Mammary epithelial cell (primary cell): ENCODE measurements at regions of chr17 and their contacts with region 1.

Region 1: DNA sequence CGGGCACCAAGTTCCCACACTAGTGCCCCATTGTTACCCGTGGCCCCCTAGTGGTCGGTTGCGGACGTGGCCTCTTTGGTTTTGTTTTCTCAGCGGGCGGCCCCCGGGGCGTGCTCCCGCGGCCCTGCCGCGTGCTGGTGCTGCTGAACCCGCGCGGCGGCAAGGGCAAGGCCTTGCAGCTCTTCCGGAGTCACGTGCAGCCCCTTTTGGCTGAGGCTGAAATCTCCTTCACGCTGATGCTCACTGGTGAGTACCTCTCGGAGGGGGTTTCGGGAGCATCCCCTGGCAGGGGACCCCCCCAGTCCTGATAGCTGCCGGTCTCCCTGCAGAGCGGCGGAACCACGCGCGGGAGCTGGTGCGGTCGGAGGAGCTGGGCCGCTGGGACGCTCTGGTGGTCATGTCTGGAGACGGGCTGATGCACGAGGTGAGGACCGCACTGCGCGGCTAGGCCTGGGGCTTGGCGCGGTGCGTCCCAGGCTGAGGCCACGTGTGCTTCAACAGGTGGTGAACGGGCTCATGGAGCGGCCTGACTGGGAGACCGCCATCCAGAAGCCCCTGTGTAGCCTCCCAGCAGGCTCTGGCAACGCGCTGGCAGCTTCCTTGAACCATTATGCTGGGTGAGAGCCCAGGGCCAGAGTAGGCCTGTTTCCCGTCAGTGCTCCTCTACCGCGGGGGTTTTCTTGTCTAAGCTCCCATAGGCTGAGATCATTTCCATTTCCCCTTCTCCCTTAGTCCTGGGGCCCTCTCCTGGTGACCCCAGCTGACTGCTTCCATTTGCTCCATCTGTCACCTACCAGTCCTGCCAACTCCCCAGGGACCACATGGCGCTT is 1.7 kb downstream of the SPHK1 start:
- DNase-seq: peak; percentile 74
- H3K4me3 ChIP-seq: peak overlapping the region; percentile 63 to 69 (median 68)
- H3K27ac ChIP-seq: peak overlapping the region; percentile 86
- H3K4me1 ChIP-seq: peaks cover 38% of the 10 kb centered on the region
- H3K27me3 ChIP-seq: no peaks in the 10 kb centered on the region
- CTCF ChIP-seq: peak; percentile 76 to 81

Region 2: GRCh38 chr17:76204277-76204676 is 181.8 kb before region 1 on chr17:
- CTCF ChIA-PET with region 1: interaction called, 10 read pairs
- dilution Hi-C with region 1: no loop called
- in situ Hi-C with region 1: no loop called
- intact Hi-C with region 1: no loop called
- DNase-seq: peak; percentile 47
- H3K4me3 ChIP-seq: no peak overlapping the region
- H3K27ac ChIP-seq: no peak overlapping the region
- H3K4me1 ChIP-seq: peaks cover 9% of the 10 kb centered on the region
- H3K27me3 ChIP-seq: no peaks in the 10 kb centered on the region
- CTCF ChIP-seq: no peak

Region 3: DNA sequence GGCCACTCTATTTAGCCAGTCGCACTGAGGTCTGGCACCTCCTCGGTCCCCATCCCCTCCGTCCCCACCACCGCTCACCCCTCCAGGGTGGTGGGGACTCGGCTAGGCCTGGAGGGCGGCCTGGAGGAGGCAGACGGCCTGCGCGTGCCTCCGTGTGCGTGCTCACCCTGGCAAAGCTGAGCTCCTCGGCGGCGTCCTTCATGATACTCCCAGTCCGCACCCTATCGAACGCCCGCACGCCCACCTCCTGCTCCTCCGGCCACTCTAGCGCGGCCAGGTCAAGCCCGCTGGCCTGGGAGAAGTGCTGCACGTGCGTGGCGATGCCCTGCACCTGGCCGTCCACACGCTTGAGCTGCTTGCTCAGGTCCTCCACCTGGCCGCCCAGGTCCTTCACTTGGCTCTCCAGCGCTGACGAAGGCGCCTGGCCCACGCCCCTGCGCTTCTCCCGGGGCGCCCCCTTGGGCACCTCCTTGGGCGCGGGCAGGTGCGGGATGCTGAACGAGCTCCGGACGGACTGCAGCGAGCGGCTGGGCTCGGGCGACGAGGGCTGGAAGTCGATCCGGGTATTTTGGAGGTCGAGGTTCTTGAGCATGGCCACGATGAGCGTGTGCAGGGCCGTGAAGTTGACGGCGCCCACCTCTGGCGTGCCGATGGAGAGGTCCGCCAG is 78.7 kb before region 1 on chr17:
- CTCF ChIA-PET with region 1: no interaction called
- dilution Hi-C with region 1: no loop called
- in situ Hi-C with region 1: no loop called
- intact Hi-C with region 1: loop called (anchors 1 kb)
- DNase-seq: no peak
- H3K4me3 ChIP-seq: no peak overlapping the region
- H3K27ac ChIP-seq: no peak overlapping the region
- H3K4me1 ChIP-seq: no peaks in the 10 kb centered on the region
- H3K27me3 ChIP-seq: no peaks in the 10 kb centered on the region
- CTCF ChIP-seq: no peak

Region 4: DNA sequence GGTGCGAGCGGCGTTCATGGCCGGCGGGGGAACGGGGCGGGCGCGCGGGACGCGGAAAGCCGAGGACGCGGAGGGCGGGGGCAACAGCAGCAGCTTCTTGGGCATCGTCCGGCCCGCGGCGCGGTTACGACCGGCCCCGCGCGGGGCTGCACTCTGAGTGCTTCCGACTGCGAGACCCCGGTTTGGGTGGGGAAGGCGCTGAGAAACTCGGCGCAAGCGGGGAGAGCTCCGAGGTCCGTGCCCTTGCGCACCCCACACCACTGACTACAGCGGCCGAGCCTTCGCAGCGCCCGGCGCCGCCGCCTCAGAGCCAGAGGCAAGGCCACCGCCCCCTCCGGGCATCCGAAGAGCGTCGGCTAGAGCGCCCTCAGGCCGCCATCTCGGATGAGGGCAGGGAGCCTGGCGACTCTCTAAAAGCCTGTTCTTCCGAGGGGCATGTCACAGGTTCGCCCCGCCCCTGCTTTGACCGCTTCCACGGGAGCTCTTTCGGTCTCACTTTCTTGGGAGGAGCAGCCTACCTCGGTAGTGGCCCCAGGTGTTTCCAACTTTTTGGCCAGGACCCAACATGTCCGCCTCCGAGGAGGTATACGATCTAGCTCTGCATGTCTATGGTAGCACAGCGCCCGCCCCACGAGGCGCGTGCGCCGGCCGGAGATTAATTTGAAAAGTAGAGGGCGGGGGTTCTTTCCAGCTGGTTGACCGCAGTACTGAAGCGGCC is 32.3 kb before region 1 on chr17 and contains the start of gene PRPSAP1:
- CTCF ChIA-PET with region 1: interaction called, 5 read pairs
- dilution Hi-C with region 1: no loop called
- in situ Hi-C with region 1: no loop called
- intact Hi-C with region 1: loop called (anchors 1 kb)
- DNase-seq: peak; percentile 98
- H3K4me3 ChIP-seq: peak within 1 kb of the TSS; percentile 68 to 90 (median 72)
- H3K27ac ChIP-seq: peak within 1 kb of the TSS; percentile 81
- H3K4me1 ChIP-seq: peaks cover 8% of the 10 kb centered on the region
- H3K27me3 ChIP-seq: no peaks in the 10 kb centered on the region
- CTCF ChIP-seq: peak; percentile 5 to 63
- total RNA-seq, gene PRPSAP1: 56.4 to 84.0 TPM

Region 5: DNA sequence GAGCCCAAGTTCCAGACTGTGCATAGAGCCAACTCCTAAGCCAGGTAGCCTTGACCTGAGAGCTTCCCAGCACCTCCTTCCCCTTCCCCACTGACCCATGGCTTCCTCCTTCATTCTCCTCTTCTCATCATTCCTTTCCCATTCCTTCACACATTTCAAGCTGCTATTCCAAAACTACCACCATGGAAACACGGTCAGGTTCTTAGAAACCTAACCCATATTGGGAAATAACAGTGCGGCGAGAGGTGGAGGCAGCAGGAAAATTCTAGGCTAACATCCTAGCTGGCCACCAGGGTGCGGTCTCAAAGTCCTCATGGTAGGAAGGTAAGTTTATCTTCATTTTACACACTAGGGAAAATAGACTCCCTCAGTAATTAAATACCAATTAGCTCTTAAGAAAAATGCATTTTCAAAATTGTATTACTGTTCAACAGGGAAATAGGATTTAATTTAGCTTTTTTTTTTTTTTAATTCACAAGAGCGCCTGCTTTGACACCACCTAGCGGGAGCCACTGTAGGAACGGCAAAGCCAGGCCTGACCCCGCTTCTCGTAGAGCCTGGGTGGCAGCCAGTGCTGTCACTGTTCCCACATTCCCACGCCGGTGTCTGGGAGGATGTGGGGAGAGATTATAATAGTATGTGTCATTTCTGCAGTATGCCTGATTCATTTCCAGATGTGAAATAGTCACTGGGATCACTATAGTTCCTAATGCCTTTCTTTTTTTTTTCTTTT is 15.7 kb before region 1 on chr17:
- CTCF ChIA-PET with region 1: interaction called, 10 read pairs
- dilution Hi-C with region 1: no loop called
- in situ Hi-C with region 1: no loop called
- intact Hi-C with region 1: loop called (anchors 1 kb)
- DNase-seq: peak; percentile 95
- H3K4me3 ChIP-seq: no peak overlapping the region
- H3K27ac ChIP-seq: peak overlapping the region; percentile 91
- H3K4me1 ChIP-seq: peaks cover 43% of the 10 kb centered on the region
- H3K27me3 ChIP-seq: no peaks in the 10 kb centered on the region
- CTCF ChIP-seq: peak; percentile 62

Region 6: DNA sequence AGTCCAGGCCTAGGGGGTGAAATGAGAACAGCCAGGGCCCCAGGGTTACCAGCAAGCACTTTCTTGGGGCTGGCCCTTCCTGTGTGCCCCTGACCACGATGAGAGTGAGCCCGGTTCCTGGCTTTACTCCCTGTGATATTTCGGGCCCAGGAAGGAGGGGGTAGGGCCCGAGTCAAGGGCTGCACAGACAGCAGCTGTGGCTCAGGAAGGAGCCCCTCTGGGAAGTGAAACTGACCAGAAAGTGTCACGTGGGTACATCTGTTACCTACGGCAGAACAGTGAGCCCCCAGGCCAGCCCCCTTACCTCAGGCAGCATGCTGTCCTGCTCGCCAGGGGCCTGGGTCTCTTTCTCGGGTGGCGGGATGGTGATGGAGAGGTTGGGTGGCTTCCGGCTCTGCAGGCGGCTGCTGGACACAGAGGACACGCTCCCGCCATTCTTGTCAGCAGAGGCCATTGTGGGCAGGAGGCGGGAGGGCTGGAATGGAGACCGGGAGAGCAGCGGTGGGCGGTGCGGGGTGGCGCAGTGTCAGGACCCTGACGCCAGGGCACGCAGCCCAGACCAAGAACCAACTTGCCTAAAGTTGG is 95.1 kb after region 1 on chr17:
- CTCF ChIA-PET with region 1: no interaction called
- dilution Hi-C with region 1: no loop called
- in situ Hi-C with region 1: no loop called
- intact Hi-C with region 1: no loop called
- DNase-seq: no peak
- H3K4me3 ChIP-seq: no peak overlapping the region
- H3K27ac ChIP-seq: no peak overlapping the region
- H3K4me1 ChIP-seq: peaks cover 6% of the 10 kb centered on the region
- H3K27me3 ChIP-seq: no peaks in the 10 kb centered on the region
- CTCF ChIP-seq: no peak